ENCODE measurements at regions of chr1 and their contacts with region 1.

Region 1: GRCh38 chr1:179921472-179921871 is 33.1 kb upstream of the CEP350 start:
- DNase-seq: no peak
- ATAC-seq: no peak
- H3K4me3 ChIP-seq: no peak overlapping the region
- H3K27ac ChIP-seq: no peak overlapping the region
- H3K4me1 ChIP-seq: peaks cover 3% of the 10 kb centered on the region; the same call in 1 of the 3 replicates
- CTCF ChIP-seq: no peak
- EP300 ChIP-seq: no peak
- POLR2A ChIP-seq: no peak
- RAD21 ChIP-seq: no peak

Region 2: DNA sequence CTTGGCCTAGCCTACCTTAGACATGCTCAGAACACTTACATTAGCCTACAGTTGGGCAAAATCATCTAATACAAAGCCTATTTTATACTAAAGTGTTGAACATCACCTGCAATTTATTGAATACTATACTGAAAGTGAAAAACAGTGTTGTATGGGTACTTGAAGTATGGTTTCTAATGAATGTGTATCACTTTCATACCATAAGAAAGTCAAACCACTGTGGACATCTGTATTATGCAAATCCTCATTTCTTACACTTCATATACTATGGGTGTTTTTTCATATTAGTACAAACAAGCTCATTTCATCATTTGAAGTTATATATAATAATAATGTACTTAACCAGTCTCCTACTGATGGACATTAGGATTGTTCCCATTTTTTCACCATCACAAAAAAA is 288.6 kb before region 1 on chr1:
- CTCF ChIA-PET with region 1: no interaction called
- POLR2A ChIA-PET with region 1: no interaction called
- DNase-seq: no peak
- ATAC-seq: no peak
- H3K4me3 ChIP-seq: no peak overlapping the region
- H3K27ac ChIP-seq: no peak overlapping the region
- H3K4me1 ChIP-seq: no peaks in the 10 kb centered on the region
- CTCF ChIP-seq: no peak
- EP300 ChIP-seq: no peak
- POLR2A ChIP-seq: no peak
- RAD21 ChIP-seq: no peak

Region 3: DNA sequence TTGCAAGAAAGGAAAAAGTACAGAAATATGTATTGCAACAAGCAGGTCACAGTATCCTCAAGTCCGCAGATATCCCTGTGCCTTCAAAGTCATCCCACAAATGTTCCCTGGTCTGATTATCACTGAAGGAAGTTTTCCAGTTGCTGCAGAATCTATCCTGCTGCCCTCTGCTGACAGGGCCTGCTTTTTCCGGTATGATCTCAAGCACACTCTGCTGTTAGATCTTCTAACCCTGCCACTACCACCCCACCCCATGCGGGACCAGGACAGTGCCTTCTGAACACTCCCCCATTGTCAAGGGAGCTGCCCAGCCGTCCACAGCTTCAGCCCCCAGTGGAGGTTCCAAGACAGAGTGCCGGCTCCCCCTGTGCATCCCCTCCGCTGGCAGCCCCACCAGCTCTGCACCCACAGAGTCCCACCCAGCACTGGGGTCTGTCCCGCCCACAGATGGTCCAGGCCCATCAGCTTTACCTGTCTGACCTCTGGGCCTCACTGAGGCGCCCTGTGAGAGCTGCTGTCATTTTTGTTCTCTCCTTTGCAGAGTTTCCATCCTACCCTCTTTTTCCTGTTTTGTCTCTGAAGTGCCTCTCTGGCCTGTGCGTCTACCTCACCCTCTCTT is 150.5 kb before region 1 on chr1:
- CTCF ChIA-PET with region 1: no interaction called
- POLR2A ChIA-PET with region 1: no interaction called
- DNase-seq: peak in 1 of 2 experiments; percentile 10
- ATAC-seq: peak; percentile 27 to 59; a peak in 3 of 6 replicates
- H3K4me3 ChIP-seq: no peak overlapping the region
- H3K27ac ChIP-seq: no peak overlapping the region
- H3K4me1 ChIP-seq: no peaks in the 10 kb centered on the region
- CTCF ChIP-seq: no peak
- EP300 ChIP-seq: no peak
- POLR2A ChIP-seq: no peak
- RAD21 ChIP-seq: no peak

Region 4: GRCh38 chr1:179910934-179911333 is 10.5 kb before region 1 on chr1:
- CTCF ChIA-PET with region 1: interaction called, 3 read pairs
- POLR2A ChIA-PET with region 1: interaction called, 10 read pairs
- DNase-seq: no peak
- ATAC-seq: no peak
- H3K4me3 ChIP-seq: no peak overlapping the region
- H3K27ac ChIP-seq: no peak overlapping the region
- H3K4me1 ChIP-seq: no peaks in the 10 kb centered on the region
- CTCF ChIP-seq: no peak
- EP300 ChIP-seq: no peak
- POLR2A ChIP-seq: no peak
- RAD21 ChIP-seq: no peak

Measured in A549 (cell line).